ENCODE measurements at regions of chr1 and their contacts with region 1.

Region 1: GRCh38 chr1:23743287-23744052 is at the start of gene ELOA:
- DNase-seq: peak; percentile 68 to 92 (median 78)
- ATAC-seq: peak; percentile 83 to 91 (median 86)
- H3K4me3 ChIP-seq: peak within 1 kb of the TSS; percentile 74 to 98 (median 93)
- H3K27ac ChIP-seq: peak within 1 kb of the TSS; percentile 77 to 88 (median 84)
- H3K4me1 ChIP-seq: peaks cover 4 to 29% (median 8%) of the 10 kb centered on the region in 3 donors
- H3K27me3 ChIP-seq: no peaks in the 10 kb centered on the region
- CTCF ChIP-seq: no peak
- total RNA-seq, gene ELOA: 23.5 to 33.9 (median 27.0) TPM

Region 2: DNA sequence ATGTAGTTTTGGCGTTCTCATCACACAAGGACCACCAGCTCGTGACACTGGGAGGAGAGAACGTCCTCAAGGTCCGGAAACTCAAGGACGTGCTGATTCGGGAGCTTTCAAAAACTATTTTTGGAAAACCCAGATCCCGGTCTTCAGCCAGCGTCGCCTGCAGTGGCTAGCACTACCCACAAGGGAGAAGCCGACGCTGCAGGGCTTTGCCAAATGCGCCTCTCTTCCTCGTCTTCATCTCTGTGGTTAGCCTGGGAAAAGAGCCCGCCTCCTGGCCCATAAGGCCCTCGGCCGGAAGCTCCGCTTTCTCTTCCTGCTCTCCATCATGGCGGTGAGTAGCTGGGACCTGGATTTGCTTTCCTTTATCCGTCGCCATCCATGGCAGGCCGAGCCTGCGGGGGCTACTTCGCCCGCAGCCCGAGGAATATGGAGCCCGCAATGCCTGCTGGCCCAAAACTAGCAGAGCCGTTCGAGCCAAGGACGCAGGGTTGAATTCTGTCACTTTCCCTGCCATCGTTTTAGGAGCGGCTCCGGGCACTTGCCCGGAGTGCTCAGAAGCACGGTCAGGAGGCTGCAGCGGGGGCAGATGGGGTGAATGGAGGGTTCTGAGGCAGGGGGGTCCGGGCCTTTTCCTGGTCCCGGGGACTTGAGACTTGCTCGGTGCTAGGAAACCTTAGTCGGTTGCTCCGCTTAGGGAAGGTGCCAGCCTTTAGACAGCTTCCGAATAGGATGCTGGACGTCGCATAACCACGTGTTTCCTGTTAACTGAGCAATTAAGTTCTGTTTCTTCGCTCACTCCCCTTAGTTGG is 51.8 kb before region 1 on chr1 and contains the start of gene RPL11:
- intact Hi-C with region 1: loop called in 2 of 3 experiments (anchors 5 to 10 kb)
- DNase-seq: peak; percentile 86 to 97 (median 93)
- ATAC-seq: peak; percentile 99 to 100 (median 100)
- H3K4me3 ChIP-seq: peak within 1 kb of the TSS; percentile 62 to 93 (median 83)
- H3K27ac ChIP-seq: peak within 1 kb of the TSS; percentile 69 to 85 (median 76)
- H3K4me1 ChIP-seq: peaks cover 11 to 34% (median 17%) of the 10 kb centered on the region in 3 donors
- H3K27me3 ChIP-seq: no peaks in the 10 kb centered on the region
- CTCF ChIP-seq: peak; percentile 65 to 90 (median 82)
- total RNA-seq, gene RPL11: 511 to 819 (median 681) TPM

Region 3: GRCh38 chr1:23699280-23700179 is 43.9 kb before region 1 on chr1:
- intact Hi-C with region 1: loop called in 2 of 3 experiments (anchors 5 to 10 kb)
- DNase-seq: no peak
- ATAC-seq: no peak
- H3K4me3 ChIP-seq: no peak overlapping the region
- H3K27ac ChIP-seq: no peak overlapping the region
- H3K4me1 ChIP-seq: peaks cover 0 to 22% (median 3%) of the 10 kb centered on the region in 3 donors
- H3K27me3 ChIP-seq: no peaks in the 10 kb centered on the region
- CTCF ChIP-seq: no peak

Region 4: DNA sequence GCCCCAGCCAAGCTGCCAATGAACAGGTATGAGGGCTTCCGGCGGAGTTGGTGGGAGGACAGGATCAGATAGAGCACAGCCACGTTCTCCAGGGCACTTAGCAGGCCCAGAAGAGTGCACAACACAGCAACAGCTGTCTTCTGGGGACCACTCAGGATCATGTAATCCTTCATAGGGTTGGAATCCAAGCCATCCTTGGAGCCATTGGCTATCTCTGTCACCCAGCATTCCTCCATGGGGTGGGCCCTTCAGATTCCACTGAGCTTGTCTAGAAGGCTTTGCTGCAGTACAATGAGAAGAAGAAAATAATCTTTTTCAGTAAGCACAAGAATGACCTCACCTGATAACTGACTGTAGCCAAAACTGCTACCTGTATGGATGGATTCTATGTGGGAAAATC is 131.9 kb after region 1 on chr1:
- intact Hi-C with region 1: no loop called
- DNase-seq: no peak
- ATAC-seq: no peak
- H3K4me3 ChIP-seq: no peak overlapping the region
- H3K27ac ChIP-seq: no peak overlapping the region
- H3K4me1 ChIP-seq: no peaks in the 10 kb centered on the region
- H3K27me3 ChIP-seq: no peaks in the 10 kb centered on the region
- CTCF ChIP-seq: no peak

Region 5: DNA sequence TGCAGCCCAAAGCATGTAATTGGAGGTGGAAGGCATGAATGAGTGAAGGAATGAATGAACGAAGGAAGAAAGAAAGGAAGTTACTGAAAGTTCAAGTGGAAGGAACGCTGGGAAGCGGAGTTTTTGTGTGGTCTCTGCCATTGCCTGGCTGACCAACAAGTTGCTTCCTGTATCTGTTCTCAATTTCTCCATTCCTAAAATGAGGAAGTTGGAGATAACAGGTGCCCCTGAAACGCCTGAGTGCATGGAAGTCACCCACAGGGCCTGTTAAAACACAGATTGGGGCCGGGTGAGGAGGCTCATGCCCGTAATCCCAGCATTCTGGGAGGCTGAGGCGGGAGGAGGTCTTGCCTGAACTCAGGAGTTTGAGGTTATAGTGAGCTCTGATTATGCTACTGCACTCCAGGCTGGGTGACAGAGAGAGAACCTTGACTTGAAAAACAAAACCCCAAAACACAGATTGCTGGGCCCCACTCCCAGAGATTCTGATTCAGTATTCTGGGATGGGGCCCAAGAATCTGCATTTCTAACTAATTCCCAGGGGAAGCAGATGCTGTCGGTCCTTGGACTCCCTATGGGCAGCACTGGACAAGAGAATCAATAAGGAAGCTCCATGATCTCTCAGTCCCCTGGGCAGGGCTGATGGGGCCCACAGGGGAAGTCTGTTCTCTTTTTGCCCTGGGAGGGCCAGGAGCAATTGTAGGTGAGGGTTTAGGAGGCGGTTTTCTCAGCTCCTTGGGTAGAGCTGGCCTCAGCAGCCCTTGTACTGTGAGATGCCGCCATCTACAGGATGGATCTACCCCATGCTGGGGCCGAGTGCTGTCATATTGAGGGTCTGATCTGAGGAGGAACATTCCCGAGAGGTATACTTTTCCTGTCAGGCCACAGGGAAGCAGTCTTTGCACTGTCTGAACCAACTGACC is 173.0 kb after region 1 on chr1:
- intact Hi-C with region 1: no loop called
- DNase-seq: peak in 5 of 6 donors; percentile 34 to 62 (median 47)
- ATAC-seq: peak; percentile 60 to 87 (median 80)
- H3K4me3 ChIP-seq: no peak overlapping the region
- H3K27ac ChIP-seq: no peak overlapping the region
- H3K4me1 ChIP-seq: peaks cover 0 to 12% (median 11%) of the 10 kb centered on the region in 3 donors
- H3K27me3 ChIP-seq: no peaks in the 10 kb centered on the region
- CTCF ChIP-seq: peak in 3 of 4 donors; percentile 21 to 31 (median 25)